Left lung (tissue), 14 donors: ENCODE measurements at regions of chr18 and their contacts with region 1.

Region 1: DNA sequence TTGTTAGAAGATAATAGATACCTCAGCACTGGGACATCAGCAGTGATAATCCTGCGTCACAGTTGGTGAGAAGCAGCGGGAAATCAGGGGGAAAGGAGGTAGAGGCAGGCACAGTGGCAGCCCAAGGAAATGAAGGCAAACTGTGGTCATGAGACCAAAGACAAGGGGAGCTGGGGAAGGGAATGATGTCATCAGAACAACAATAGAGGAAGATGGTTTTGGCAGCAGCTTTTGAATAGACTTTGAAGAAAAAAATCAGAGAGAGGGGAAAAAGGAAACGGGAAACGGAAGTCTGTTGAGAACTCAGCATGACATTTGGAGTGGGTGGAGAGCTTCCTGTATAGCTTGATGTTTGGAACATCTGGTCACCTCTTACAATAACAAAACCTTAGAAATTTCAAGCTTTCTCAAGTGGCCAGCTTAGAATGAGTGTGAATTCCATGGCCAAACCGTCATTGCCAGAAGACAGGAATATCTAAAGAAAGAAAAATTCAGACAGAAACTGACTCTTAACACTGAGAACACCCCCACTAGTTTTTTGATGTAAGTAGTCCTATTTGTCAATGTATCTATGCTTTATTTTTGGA is 18.4 kb upstream of the YES1 start:
- DNase-seq: no peak
- ATAC-seq: peak; percentile 52
- H3K4me3 ChIP-seq: no peak overlapping the region
- H3K27ac ChIP-seq: peak overlapping the region in 1 of 2 donors; percentile 64
- H3K4me1 ChIP-seq: peaks cover 0 to 15% of the 10 kb centered on the region in 2 donors
- H3K27me3 ChIP-seq: peaks cover 0 to 60% of the 10 kb centered on the region in 2 donors
- CTCF ChIP-seq: no peak

Region 2: DNA sequence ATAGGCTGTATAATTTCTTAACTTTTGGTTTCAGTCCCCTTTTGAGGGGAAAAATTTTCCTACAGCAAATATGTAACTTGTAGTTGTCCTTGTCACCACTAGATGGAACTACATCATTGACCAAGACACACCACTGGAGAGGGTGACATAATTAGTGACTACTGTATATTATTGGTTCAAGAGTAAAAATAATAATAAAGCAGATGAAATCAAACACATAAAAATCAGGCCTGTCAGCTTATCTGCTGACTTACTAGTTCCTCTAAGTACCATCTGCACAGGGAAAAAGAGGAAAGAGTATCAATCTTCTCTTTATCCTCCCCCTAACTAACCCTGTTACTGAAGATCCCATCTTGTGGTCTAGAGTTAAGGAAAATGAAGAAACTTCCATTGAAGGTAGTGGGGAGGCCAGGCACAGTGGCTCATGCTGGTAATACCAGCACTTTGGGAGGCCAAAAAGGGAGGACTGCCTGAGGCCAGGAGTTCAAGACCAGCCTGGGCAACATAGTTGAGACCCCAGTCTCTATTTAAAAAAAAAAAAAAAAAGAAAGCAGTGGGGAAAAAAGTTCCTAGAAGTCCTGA is 88.4 kb before region 1 on chr18:
- intact Hi-C with region 1: loop called in 1 of 2 experiments (anchors 5 kb)
- DNase-seq: peak in 2 of 4 donors; percentile 20 to 35
- ATAC-seq: peak; percentile 92
- H3K4me3 ChIP-seq: no peak overlapping the region
- H3K27ac ChIP-seq: no peak overlapping the region
- H3K4me1 ChIP-seq: no peaks in the 10 kb centered on the region
- H3K27me3 ChIP-seq: no peaks in the 10 kb centered on the region
- CTCF ChIP-seq: peak; percentile 69 to 73

Region 3: GRCh38 chr18:892316-892715 is 61.9 kb after region 1 on chr18:
- intact Hi-C with region 1: no loop called
- DNase-seq: no peak
- ATAC-seq: no peak
- H3K4me3 ChIP-seq: no peak overlapping the region
- H3K27ac ChIP-seq: no peak overlapping the region
- H3K4me1 ChIP-seq: no peaks in the 10 kb centered on the region
- H3K27me3 ChIP-seq: peaks cover 0 to 23% of the 10 kb centered on the region in 2 donors
- CTCF ChIP-seq: no peak

Region 4: GRCh38 chr18:923141-923866 is 92.9 kb after region 1 on chr18:
- intact Hi-C with region 1: no loop called
- DNase-seq: no peak
- ATAC-seq: no peak
- H3K4me3 ChIP-seq: no peak overlapping the region
- H3K27ac ChIP-seq: no peak overlapping the region
- H3K4me1 ChIP-seq: no peaks in the 10 kb centered on the region
- H3K27me3 ChIP-seq: peaks cover 0 to 6% of the 10 kb centered on the region in 2 donors
- CTCF ChIP-seq: no peak